Heart left ventricle (tissue), 16 donors: ENCODE measurements at regions of chr18 and their contacts with region 1.

Region 1: DNA sequence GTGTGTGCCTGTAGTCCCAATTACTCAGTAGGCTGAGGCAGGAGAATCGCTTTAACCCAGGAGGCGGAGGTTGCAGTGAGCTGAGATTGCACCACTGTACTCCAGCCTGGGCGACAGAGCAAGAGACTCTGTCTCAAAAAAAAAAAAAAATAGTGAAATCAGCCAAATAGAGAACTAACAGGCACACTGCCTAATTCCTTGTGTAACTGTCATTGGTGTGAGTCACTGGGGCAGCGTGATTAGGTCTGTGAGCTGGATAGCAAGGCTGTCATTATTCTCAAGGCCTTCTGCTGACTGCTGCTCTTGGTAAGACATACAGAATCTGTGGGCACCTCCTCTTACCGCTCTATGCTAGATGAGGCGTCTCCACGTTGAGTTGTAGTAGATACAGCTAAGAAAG is 270.3 kb downstream of the NEDD4L start:
- DNase-seq: peak in 4 of 5 donors; percentile 36 to 67 (median 54)
- ATAC-seq: peak; percentile 47 to 82 (median 72)
- H3K4me3 ChIP-seq: no peak overlapping the region
- H3K27ac ChIP-seq: peak overlapping the region; percentile 13 to 84 (median 64)
- H3K4me1 ChIP-seq: peaks cover 0 to 73% (median 42%) of the 10 kb centered on the region in 12 donors
- H3K27me3 ChIP-seq: no peaks in the 10 kb centered on the region
- CTCF ChIP-seq: no peak
- POLR2A ChIP-seq: peak in 1 of 2 donors; percentile 36

Region 2: DNA sequence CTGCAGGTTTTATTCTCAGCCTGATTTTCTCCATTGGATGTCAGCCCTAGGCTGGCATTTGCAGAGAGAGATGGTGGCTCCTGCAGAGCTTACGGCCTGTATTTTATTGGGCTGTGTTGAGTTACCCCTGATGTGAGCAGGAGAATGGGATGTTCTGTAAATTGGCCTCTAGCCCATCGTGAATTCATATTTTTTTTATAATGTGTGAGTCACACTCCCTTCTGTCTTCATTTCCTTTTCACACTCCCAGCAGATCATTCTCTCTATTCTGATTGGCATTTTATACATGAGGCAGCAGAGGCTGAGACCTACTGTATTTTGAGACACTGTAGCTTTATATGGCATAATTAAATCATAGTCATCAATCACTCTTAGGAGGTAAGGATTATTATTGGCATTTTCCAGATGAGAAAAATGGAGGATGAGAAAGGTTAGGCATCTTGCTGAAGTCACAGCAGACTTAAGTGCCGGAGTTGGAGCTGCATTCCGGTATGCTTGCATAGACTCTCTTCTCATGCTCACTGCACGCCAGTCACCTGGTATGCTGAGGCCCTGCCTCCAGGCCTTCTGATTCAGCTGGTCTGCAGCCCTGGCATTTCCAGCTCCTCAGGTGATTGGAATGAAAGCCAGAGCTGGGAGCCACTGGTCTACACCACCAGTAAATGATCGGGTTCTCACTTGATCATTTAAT is 127.9 kb before region 1 on chr18:
- intact Hi-C with region 1: loop called in 3 of 10 experiments (anchors 5 to 10 kb)
- DNase-seq: peak in 1 of 5 donors; percentile 39
- ATAC-seq: peak in 3 of 4 donors; percentile 27 to 67 (median 53)
- H3K4me3 ChIP-seq: no peak overlapping the region
- H3K27ac ChIP-seq: peak overlapping the region in 1 of 12 donors; percentile 41
- H3K4me1 ChIP-seq: peaks cover 0 to 18% (median 0%) of the 10 kb centered on the region in 12 donors
- H3K27me3 ChIP-seq: no peaks in the 10 kb centered on the region
- CTCF ChIP-seq: no peak
- POLR2A ChIP-seq: no peak

Region 3: DNA sequence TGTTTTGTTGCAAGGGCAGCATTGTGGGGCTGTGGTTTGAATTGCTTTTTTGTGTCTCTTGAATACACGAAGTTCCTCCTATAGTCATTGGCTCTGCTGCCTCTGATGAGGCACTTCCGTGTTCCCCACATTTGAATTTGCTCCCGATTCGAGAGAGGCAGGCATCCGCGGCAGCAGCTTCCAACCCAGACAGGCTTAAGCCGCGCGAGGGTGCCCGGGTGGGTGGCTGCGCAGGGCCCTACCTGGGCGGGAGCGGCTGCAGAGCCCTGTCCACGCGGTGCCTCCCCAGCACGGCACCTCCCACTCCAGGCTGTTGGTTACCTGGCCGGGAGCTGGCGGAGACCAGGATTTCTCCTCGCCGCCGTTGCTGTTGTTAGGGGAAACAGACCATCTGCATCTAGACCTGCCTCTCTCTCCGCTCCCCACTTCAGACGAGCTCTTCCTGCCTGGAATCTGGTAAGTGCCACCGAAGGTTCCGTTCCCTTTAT is 119.0 kb before region 1 on chr18:
- intact Hi-C with region 1: loop called in 4 of 10 experiments (anchors 5 to 10 kb)
- DNase-seq: peak in 1 of 5 donors; percentile 57
- ATAC-seq: peak in 3 of 4 donors; percentile 18 to 60 (median 59)
- H3K4me3 ChIP-seq: peak overlapping the region in 11 of 12 donors; percentile 17 to 64 (median 49)
- H3K27ac ChIP-seq: peak overlapping the region in 3 of 12 donors; percentile 30 to 78 (median 31)
- H3K4me1 ChIP-seq: peaks cover 0 to 26% (median 4%) of the 10 kb centered on the region in 12 donors
- H3K27me3 ChIP-seq: peaks cover 0 to 5% (median 0%) of the 10 kb centered on the region in 9 donors
- CTCF ChIP-seq: no peak
- POLR2A ChIP-seq: no peak

Region 4: GRCh38 chr18:58257461-58257860 is 56.8 kb before region 1 on chr18:
- intact Hi-C with region 1: loop called (anchors 2 to 10 kb)
- DNase-seq: no peak
- ATAC-seq: peak; percentile 8 to 24 (median 15)
- H3K4me3 ChIP-seq: peak overlapping the region; percentile 27 to 61 (median 53)
- H3K27ac ChIP-seq: peak overlapping the region; percentile 62 to 87 (median 80)
- H3K4me1 ChIP-seq: peaks cover 0 to 20% (median 0%) of the 10 kb centered on the region in 12 donors
- H3K27me3 ChIP-seq: no peaks in the 10 kb centered on the region
- CTCF ChIP-seq: no peak
- POLR2A ChIP-seq: no peak

Region 5: DNA sequence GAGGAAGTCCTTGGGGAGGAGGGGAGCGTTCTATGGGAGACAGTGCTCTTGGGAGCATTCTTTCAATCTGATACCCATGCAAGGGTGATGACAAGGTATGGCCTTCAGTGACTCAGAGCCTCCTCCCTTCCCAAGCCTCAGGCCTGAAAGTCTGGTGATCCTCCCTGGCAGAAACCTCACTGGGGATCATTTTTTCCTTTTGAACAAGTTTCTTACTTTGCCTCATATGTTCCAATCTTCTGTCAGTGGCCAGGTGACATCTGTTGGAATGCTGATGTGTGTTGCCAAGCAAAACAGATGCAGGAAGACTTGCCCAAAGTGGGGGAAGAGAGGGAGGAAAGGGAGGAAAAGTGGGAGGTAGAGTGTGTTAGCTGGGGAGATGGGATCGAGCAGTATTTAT is 45.4 kb before region 1 on chr18:
- intact Hi-C with region 1: loop called in 1 of 10 experiments (anchors 5 kb)
- DNase-seq: no peak
- ATAC-seq: peak in 2 of 4 donors; percentile 13 to 38
- H3K4me3 ChIP-seq: no peak overlapping the region
- H3K27ac ChIP-seq: peak overlapping the region in 2 of 12 donors; percentile 12 to 21
- H3K4me1 ChIP-seq: peaks cover 0 to 52% (median 20%) of the 10 kb centered on the region in 12 donors
- H3K27me3 ChIP-seq: no peaks in the 10 kb centered on the region
- CTCF ChIP-seq: no peak
- POLR2A ChIP-seq: no peak

Region 6: GRCh38 chr18:58344861-58345463 is 30.7 kb after region 1 on chr18:
- intact Hi-C with region 1: no loop called
- DNase-seq: no peak
- ATAC-seq: no peak
- H3K4me3 ChIP-seq: no peak overlapping the region
- H3K27ac ChIP-seq: peak overlapping the region in 5 of 12 donors; percentile 10 to 32 (median 14)
- H3K4me1 ChIP-seq: peaks cover 0 to 16% (median 0%) of the 10 kb centered on the region in 12 donors
- H3K27me3 ChIP-seq: no peaks in the 10 kb centered on the region
- CTCF ChIP-seq: no peak
- POLR2A ChIP-seq: no peak

Region 7: DNA sequence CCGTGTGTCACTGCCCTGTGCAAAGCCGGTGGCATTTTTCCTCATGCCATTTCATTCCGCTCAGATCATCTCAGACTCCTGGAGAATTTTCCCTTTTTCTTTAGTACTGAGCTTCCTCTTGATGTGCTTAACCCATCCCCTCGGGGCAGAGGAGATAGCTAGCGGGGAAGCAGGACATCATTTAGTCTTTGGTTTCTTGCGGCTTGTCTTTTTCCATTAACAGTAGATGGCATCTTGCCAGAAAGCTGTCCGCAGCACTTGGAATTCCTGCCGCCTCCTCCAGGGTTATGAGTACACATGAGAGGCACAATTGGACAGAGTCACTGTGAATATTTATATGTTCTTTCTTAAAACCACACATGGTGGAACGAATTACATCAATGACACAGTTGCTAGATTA is 88.0 kb after region 1 on chr18:
- intact Hi-C with region 1: no loop called
- DNase-seq: peak in 1 of 5 donors; percentile 33
- ATAC-seq: peak in 2 of 4 donors; percentile 20 to 45
- H3K4me3 ChIP-seq: no peak overlapping the region
- H3K27ac ChIP-seq: peak overlapping the region in 1 of 12 donors; percentile 56
- H3K4me1 ChIP-seq: peaks cover 0 to 22% (median 9%) of the 10 kb centered on the region in 12 donors
- H3K27me3 ChIP-seq: no peaks in the 10 kb centered on the region
- CTCF ChIP-seq: no peak
- POLR2A ChIP-seq: no peak